ENCODE measurements at regions of chr5 and their contacts with region 1.

Region 1: DNA sequence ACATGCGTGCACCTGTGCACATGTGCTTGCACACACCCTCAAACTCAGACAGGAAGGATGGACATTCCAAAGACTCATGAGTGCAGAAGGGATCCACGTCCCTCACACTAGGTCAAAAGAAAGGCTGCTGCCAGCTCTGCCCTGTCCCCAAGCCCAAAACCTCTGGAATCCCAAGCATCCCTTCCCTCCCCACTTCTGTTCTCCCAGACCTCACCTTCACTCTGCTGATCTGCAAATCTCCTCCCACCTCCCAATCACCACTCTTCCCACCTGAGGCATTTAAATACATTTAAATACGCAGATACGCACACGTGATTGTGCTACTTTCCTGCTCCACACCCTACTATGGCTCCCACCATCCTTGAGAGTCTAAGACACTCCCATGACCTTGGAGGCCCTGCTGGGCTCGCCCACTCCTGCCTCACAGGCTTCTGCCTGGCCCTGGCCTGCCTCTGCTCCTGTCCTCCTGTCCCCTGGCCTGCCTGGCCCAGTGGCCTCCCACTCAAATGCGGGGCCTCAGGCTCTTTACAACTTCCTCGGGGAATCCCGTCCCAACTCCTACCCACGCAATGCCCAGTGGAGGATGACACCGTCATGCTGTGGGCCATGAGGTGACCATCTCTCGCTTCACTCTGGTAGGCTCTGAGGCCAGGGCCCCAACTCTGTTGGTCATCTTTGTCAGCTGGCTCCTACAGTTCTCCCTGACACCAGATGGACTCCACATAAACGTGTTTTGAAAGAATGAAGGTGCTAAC is 478.4 kb upstream of the DAP start:
- DNase-seq: no peak
- H3K4me3 ChIP-seq: no peak overlapping the region
- H3K27ac ChIP-seq: no peak overlapping the region
- H3K4me1 ChIP-seq: peaks cover 10% of the 10 kb centered on the region; the same call in 1 of the 2 replicates
- H3K27me3 ChIP-seq: no peaks in the 10 kb centered on the region
- CTCF ChIP-seq: no peak

Region 2: GRCh38 chr5:9691261-9691660 is 1548.2 kb before region 1 on chr5:
- CTCF ChIA-PET with region 1: no interaction called
- POLR2A ChIA-PET with region 1: no interaction called
- intact Hi-C with region 1: loop called (anchors 5 kb)
- DNase-seq: no peak
- H3K4me3 ChIP-seq: no peak overlapping the region
- H3K27ac ChIP-seq: no peak overlapping the region
- H3K4me1 ChIP-seq: no peaks in the 10 kb centered on the region
- H3K27me3 ChIP-seq: no peaks in the 10 kb centered on the region
- CTCF ChIP-seq: no peak

Region 3: DNA sequence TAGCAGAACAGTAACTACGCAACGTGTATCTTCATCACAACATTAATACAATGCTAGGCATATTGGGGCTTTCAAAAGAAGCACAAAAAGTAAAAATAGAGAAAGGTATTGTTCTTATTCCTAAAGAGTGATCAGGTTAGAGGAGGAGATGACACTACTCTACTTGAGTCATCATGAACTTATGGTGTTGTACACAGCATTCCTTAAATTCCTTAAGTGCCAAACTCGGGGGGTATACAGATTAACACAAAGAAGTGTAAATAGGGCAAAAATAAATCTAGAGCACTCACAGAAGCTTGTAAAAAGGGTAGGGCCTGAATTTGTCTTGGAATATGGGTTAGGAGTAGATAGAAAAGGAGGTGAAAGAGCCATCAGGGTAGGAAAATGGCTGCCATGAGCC is 170.4 kb before region 1 on chr5:
- CTCF ChIA-PET with region 1: no interaction called
- POLR2A ChIA-PET with region 1: no interaction called
- intact Hi-C with region 1: no loop called
- DNase-seq: no peak
- H3K4me3 ChIP-seq: no peak overlapping the region
- H3K27ac ChIP-seq: no peak overlapping the region
- H3K4me1 ChIP-seq: peaks cover 6% of the 10 kb centered on the region; the same call in 1 of the 2 replicates
- H3K27me3 ChIP-seq: peaks cover 23% of the 10 kb centered on the region
- CTCF ChIP-seq: no peak